Activated CD4-positive, alpha-beta T cell treated with anti-CD3 and anti-CD28 coated beads for 36 hours (primary cell): ENCODE measurements at regions of chr17 and their contacts with region 1.

Region 1: GRCh38 chr17:58344047-58344790 is 7.8 kb downstream of the SUPT4H1 start:
- DNase-seq: peak; percentile 95
- ATAC-seq: peak; percentile 76
- H3K4me3 Mint-ChIP-seq: peak overlapping the region; percentile 100
- H3K27ac Mint-ChIP-seq: peak overlapping the region; percentile 99
- H3K4me1 Mint-ChIP-seq: peaks cover 74% of the 10 kb centered on the region
- H3K27me3 Mint-ChIP-seq: no peaks in the 10 kb centered on the region

Region 2: DNA sequence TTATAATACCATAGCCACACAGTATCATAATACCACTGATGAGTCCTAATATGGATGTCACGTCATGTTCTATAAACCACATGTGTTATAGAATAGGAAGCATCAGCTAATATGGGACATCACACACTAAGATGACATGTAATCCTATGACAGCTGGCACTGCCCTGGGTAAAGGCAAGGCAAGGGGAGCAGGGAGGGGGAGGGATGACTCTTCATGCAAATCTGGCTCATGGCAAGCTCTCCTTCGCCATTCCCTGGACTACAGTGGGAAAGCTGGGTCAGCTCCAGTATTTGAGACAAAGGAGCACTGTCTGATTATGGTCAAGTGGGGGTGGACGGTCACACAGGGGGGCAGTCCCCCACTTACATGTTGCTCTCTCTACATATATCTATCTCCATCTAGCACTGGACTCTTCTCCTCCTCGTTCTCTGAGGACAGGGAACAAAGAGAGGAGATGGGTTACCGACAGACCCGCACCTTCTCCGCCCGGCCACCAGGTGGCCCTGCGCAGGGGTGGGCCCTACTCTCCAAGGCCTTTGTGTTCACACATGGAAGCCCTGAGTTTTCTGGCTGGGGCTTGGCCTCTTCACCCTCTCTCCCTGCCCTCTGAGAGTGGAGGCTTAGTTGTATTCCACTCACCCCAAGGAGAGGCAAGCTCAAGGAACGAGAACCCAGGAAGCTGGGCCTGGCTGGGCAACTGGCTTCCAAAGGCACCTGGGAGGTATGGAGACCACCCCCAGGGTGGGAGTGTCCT is 40.1 kb before region 1 on chr17:
- CTCF ChIA-PET with region 1: interaction called, 7 read pairs
- POLR2A ChIA-PET with region 1: no interaction called
- intact Hi-C with region 1: loop called in 1 of 2 experiments (anchors 1 kb)
- DNase-seq: peak; percentile 80
- ATAC-seq: peak; percentile 97
- H3K4me3 Mint-ChIP-seq: no peak overlapping the region
- H3K27ac Mint-ChIP-seq: no peak overlapping the region
- H3K4me1 Mint-ChIP-seq: peaks cover 3% of the 10 kb centered on the region
- H3K27me3 Mint-ChIP-seq: no peaks in the 10 kb centered on the region

Region 3: GRCh38 chr17:58329035-58329809 is 15.0 kb before region 1 on chr17:
- CTCF ChIA-PET with region 1: interaction called, 40 read pairs
- POLR2A ChIA-PET with region 1: interaction called, 172 read pairs
- intact Hi-C with region 1: loop called (anchors 1 kb)
- DNase-seq: peak; percentile 93
- ATAC-seq: peak; percentile 43
- H3K4me3 Mint-ChIP-seq: peak overlapping the region; percentile 100
- H3K27ac Mint-ChIP-seq: peak overlapping the region; percentile 93
- H3K4me1 Mint-ChIP-seq: peaks cover 39% of the 10 kb centered on the region
- H3K27me3 Mint-ChIP-seq: peaks cover 2% of the 10 kb centered on the region

Region 4: GRCh38 chr17:58913585-58914444 is 569.6 kb after region 1 on chr17:
- CTCF ChIA-PET with region 1: no interaction called
- POLR2A ChIA-PET with region 1: no interaction called
- intact Hi-C with region 1: no loop called
- DNase-seq: no peak
- ATAC-seq: no peak
- H3K4me3 Mint-ChIP-seq: no peak overlapping the region
- H3K27ac Mint-ChIP-seq: no peak overlapping the region
- H3K4me1 Mint-ChIP-seq: no peaks in the 10 kb centered on the region
- H3K27me3 Mint-ChIP-seq: peaks cover 23% of the 10 kb centered on the region